ENCODE measurements at regions of chr3 and their contacts with region 1.

Region 1: GRCh38 chr3:192566706-192567290 is 160.5 kb downstream of the FGF12 start:
- DNase-seq: peak; percentile 78
- H3K4me3 ChIP-seq: no peak overlapping the region
- H3K27ac ChIP-seq: no peak overlapping the region
- H3K4me1 ChIP-seq: peaks cover 0 to 8% (median 1%) of the 10 kb centered on the region in 6 donors
- H3K27me3 ChIP-seq: no peaks in the 10 kb centered on the region
- CTCF ChIP-seq: peak in 10 of 11 experiments; percentile 27 to 66 (median 52)
- POLR2A ChIP-seq: no peak

Region 2: GRCh38 chr3:192772240-192772894 is 205.6 kb after region 1 on chr3:
- intact Hi-C with region 1: loop called (anchors 10 kb)
- DNase-seq: no peak
- H3K4me3 ChIP-seq: no peak overlapping the region
- H3K27ac ChIP-seq: no peak overlapping the region
- H3K4me1 ChIP-seq: no peaks in the 10 kb centered on the region
- H3K27me3 ChIP-seq: no peaks in the 10 kb centered on the region
- CTCF ChIP-seq: peak in 7 of 11 experiments; percentile 20 to 57 (median 40)
- POLR2A ChIP-seq: no peak

Region 3: DNA sequence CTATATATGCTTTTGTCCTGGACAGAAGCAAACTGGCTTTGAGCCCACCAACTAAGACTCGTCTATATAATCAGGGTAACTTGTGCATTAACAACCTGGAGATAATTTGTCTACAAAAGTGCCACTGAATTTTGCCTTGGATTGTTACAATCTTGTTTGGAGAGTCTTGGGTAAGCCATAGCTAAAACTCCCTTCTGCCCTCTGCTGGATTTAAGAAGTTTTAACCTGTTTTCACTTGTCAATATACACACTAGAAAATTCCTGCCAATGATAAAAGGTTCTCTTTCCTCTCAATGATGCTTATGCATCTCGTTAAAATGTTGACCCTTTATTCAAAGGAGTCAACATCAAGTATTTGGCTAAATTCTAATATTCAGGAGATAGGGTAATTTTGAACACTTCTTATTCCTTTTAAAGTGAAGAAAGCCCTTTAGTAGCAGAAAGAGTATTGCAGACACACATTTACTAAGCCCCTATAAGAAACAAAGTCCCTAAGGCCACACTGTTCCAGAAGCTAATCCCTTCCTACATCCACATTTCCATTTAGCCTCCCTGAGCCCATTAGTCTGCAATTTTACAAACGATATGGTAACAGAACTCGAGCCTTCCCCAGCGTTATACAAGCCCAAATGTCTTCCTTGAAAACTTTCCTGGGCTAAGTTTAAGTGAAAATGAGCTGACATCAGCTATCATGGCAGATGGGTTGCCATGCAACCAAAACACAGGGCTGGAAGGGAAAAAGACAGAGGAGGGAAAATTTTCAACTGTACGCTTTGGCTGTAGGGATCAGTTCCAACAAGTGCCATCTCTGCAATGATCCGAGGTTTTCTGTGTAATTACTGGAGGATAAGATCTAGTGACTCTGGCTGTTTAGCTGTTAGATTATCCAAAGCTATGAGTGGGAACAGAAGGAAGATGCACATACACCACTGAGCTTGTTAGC is 236.4 kb after region 1 on chr3:
- intact Hi-C with region 1: loop called (anchors 2 kb)
- DNase-seq: no peak
- H3K4me3 ChIP-seq: no peak overlapping the region
- H3K27ac ChIP-seq: no peak overlapping the region
- H3K4me1 ChIP-seq: no peaks in the 10 kb centered on the region
- H3K27me3 ChIP-seq: no peaks in the 10 kb centered on the region
- CTCF ChIP-seq: peak in 9 of 11 experiments; percentile 12 to 58 (median 40)
- POLR2A ChIP-seq: no peak